ENCODE measurements at regions of chr2 and their contacts with region 1.

Region 1: DNA sequence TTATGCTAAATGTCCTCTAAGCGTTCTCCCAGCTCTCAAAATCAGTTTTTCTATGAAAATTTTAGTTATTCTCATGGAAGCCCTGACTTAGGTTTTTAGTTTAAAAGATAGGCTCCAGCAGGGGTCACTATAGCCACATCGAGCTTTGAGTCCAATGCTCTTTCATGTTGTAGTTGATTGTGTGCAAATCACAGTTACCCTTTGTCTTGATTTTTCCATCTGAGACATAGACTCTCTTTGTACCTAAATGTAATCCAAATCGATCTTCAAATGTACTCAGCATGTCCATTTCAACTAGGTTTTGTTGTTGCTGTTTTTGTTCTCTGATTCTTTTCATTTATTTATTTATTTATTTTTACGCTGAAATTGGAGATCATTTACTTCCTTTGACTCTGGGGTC is 26.4 kb upstream of the MSTN start:
- DNase-seq: peak; percentile 34
- CTCF ChIP-seq: peak; percentile 50

Region 2: GRCh38 chr2:190277234-190278112 is 188.6 kb after region 1 on chr2:
- in situ Hi-C with region 1: loop called (anchors 25 kb)
- DNase-seq: peak; percentile 10
- CTCF ChIP-seq: no peak

Region 3: DNA sequence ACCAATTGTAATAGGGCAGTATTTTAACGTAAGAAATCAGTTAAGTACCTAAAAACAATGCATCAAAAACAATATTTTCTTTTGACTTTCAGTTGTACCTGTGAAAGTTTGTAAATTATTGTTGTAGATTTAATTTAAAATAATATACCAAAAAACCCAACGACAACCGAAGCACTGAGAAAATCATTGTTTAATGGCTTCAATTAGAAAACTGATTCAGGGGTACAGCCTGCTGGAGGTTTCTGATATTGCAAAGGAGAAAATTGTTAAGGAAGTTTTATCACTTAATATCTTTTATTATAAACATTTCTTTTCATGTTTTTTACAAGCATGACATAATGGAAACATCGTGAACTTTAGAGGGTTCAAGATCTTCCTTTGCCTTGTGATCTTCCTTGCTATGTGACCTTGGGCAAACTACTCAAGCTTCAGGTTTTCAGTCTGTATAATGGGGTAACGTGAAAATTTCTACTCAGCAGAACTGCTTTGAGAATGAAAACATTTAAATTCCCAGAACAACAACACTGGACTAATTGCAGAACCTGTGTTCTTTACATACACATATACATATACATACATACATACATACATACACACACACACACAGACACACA is 715.4 kb after region 1 on chr2:
- in situ Hi-C with region 1: loop called (anchors 25 kb)
- DNase-seq: no peak
- CTCF ChIP-seq: no peak

Measured in GM13976 (cell line).